Heart right ventricle (tissue), 16 donors: ENCODE measurements at regions of chr9 and their contacts with region 1.

Region 1: GRCh38 chr9:5416962-5417361 is 20.8 kb downstream of the PLGRKT start:
- DNase-seq: no peak
- ATAC-seq: no peak
- H3K4me3 ChIP-seq: no peak overlapping the region
- H3K27ac ChIP-seq: no peak overlapping the region
- H3K4me1 ChIP-seq: no peaks in the 10 kb centered on the region
- H3K27me3 ChIP-seq: no peaks in the 10 kb centered on the region
- CTCF ChIP-seq: no peak

Region 2: DNA sequence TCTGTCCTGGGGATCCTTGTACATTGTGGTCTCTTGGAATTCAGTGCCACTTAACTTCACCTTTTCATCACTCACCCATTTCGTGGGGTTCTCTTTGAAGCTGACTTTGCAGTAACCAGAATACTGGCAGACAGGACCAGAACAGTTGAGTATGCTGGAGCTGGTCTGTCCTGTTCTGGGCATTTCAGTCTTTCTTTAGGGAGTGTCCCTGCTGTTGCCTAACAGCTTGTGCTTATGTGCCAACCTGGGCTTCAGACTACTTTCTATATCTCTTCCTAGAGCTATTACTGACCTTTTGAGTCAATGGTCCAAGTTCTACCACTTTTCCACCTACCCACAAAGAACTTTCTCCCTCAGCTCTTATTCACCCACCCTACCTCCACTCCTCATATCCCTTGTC is 221.5 kb before region 1 on chr9:
- intact Hi-C with region 1: loop called in 2 of 10 experiments (anchors 5 to 10 kb)
- DNase-seq: no peak
- ATAC-seq: no peak
- H3K4me3 ChIP-seq: no peak overlapping the region
- H3K27ac ChIP-seq: no peak overlapping the region
- H3K4me1 ChIP-seq: no peaks in the 10 kb centered on the region
- H3K27me3 ChIP-seq: no peaks in the 10 kb centered on the region
- CTCF ChIP-seq: no peak

Region 3: DNA sequence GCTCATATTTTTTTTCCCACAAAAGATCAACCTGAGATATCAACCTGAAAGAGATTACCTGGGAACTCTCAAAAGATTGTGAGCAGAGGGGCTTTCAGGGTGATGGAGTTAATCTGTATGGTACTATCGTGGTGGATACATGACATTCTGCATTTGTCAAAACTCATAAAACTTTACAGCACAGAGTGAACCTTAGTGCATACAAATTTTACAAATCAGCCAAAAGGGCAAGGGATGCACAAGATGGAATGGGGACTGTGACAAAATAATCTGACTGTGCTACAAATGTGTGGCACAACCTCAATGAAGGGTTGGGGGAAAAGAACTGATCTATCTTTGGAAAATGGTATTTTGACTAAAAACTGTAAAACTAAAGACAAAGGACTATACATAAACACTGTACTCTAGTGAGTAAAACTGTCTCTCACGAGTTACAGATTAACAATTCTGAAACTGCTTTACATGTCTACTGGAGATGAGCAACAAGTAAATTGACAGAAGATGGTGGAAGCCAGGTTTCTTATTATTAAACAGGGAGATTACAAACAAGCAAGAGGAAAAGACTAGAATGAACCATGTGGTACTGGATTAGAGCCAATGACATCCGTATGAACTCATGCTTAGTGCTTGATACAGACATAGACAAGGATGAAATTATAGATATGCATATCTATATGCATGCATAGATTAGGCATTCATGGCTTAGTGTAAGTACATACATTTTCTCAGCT is 52.5 kb before region 1 on chr9:
- intact Hi-C with region 1: loop called in 1 of 10 experiments (anchors 10 kb)
- DNase-seq: no peak
- ATAC-seq: no peak
- H3K4me3 ChIP-seq: no peak overlapping the region
- H3K27ac ChIP-seq: no peak overlapping the region
- H3K4me1 ChIP-seq: peaks cover 0 to 13% (median 0%) of the 10 kb centered on the region in 9 donors
- H3K27me3 ChIP-seq: no peaks in the 10 kb centered on the region
- CTCF ChIP-seq: no peak